Activated naive CD4-positive, alpha-beta T cell treated with anti-CD3 and anti-CD28 coated beads for 36 hours (primary cell): ENCODE measurements at regions of chr1 and their contacts with region 1.

Region 1: DNA sequence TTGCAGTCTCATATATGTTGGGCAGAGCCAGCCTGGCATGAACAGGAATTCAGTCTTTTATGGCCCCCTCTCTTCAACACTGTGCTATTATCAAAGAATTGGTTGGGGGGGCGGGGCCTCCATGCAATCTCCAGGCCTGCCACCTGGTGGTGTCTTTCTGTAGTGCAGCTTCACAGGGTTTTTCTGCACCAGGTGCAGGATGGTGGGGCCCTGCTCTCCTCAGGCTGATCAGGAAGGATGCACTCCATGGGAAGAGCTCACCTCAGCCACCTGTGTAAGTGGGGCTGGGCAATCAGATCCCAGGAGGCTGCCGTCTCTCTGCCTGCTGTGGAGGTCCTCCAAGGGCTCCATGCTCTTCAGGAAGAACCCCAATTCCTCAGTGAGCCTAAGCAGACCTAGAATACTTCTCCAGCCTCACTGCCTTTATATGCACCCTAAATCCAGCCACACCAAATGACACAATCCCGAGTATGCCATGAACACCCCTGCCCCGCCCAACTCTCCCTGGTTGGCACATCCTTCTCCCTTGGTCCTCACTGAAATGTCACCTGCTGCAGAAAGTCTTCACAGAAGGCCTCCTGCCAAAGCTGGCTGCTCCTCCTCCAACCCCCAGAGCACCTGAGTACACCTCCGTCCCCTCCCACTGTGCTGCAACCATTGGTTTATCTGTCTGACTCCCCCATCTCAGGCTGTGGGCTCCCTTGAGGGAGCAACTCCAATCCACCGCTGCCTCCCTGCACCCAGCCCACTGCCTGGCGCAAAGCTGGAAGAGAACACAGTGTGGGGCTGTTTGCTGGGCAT is 16.5 kb downstream of the STK40 start:
- DNase-seq: peak; percentile 93
- H3K4me3 Mint-ChIP-seq: no peak overlapping the region
- H3K27ac Mint-ChIP-seq: peak overlapping the region; percentile 65
- H3K4me1 Mint-ChIP-seq: peaks cover 67% of the 10 kb centered on the region
- H3K27me3 Mint-ChIP-seq: no peaks in the 10 kb centered on the region

Region 2: GRCh38 chr1:35971601-35972000 is 397.7 kb before region 1 on chr1:
- CTCF ChIA-PET with region 1: no interaction called
- intact Hi-C with region 1: no loop called
- DNase-seq: no peak
- H3K4me3 Mint-ChIP-seq: no peak overlapping the region
- H3K27ac Mint-ChIP-seq: no peak overlapping the region
- H3K4me1 Mint-ChIP-seq: peaks cover 4% of the 10 kb centered on the region
- H3K27me3 Mint-ChIP-seq: no peaks in the 10 kb centered on the region

Region 3: DNA sequence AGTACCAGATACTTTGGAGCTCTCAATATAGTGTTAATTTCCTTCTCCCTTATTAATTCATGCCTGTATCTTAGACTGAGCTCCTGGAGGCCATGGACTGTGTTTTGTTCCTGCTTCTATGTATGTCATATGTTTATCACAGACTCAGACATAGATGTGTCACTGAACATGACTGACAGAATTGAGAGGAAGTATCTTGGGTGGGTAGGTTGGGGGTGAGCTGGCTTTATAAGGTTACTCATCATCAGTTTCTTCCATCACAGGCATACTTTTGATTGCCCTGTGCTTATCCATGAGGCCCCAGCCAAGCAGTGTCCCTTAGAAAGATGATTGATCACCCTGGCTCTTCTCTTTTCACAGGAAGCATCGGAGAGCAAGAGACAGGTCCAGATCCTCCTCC is 68.7 kb before region 1 on chr1:
- CTCF ChIA-PET with region 1: interaction called, 12 read pairs
- intact Hi-C with region 1: loop called (anchors 1 kb)
- DNase-seq: peak; percentile 39
- H3K4me3 Mint-ChIP-seq: no peak overlapping the region
- H3K27ac Mint-ChIP-seq: peak overlapping the region; percentile 77
- H3K4me1 Mint-ChIP-seq: peaks cover 64% of the 10 kb centered on the region
- H3K27me3 Mint-ChIP-seq: no peaks in the 10 kb centered on the region

Region 4: GRCh38 chr1:36323597-36324352 is 45.5 kb before region 1 on chr1 and contains the start of gene EVA1B:
- CTCF ChIA-PET with region 1: interaction called, 4 read pairs
- intact Hi-C with region 1: loop called (anchors 1 kb)
- DNase-seq: peak; percentile 63
- H3K4me3 Mint-ChIP-seq: peak within 1 kb of the TSS; percentile 68
- H3K27ac Mint-ChIP-seq: no peak within 1 kb of the TSS
- H3K4me1 Mint-ChIP-seq: peaks cover 16% of the 10 kb centered on the region
- H3K27me3 Mint-ChIP-seq: peaks cover 5% of the 10 kb centered on the region
- total RNA-seq, gene EVA1B: 1.9 to 2.1 TPM

Region 5: DNA sequence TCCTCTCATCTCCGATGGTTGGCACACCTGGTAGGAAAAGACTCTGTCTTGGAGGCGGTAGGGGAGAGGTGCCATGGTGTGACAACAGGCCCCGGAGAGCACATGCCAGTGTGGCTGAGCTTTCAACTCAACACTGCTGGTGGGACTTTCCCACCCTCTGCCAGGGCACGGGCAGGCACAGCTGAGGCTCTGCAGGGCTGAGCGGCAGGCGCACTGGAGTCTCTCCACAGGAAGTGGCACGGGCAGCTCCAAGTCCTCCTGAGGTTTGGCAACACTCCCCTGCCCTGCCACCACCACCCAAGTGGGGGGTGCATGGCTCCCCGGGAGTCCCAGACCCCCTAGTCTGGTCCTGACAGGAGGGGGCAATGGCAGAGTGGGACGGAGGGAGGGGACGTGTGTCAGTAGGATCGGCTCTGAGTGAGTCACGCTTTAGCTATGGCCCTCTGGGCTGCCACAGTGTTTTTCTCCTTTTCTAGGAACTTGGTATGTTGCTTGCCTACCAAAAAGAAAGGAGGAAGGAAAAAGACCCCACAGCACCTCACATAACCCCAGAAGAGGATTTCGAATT is 18.5 kb before region 1 on chr1:
- CTCF ChIA-PET with region 1: interaction called, 37 read pairs
- intact Hi-C with region 1: loop called (anchors 2 kb)
- DNase-seq: peak; percentile 74
- H3K4me3 Mint-ChIP-seq: no peak overlapping the region
- H3K27ac Mint-ChIP-seq: peak overlapping the region; percentile 75
- H3K4me1 Mint-ChIP-seq: peaks cover 30% of the 10 kb centered on the region
- H3K27me3 Mint-ChIP-seq: no peaks in the 10 kb centered on the region

Region 6: DNA sequence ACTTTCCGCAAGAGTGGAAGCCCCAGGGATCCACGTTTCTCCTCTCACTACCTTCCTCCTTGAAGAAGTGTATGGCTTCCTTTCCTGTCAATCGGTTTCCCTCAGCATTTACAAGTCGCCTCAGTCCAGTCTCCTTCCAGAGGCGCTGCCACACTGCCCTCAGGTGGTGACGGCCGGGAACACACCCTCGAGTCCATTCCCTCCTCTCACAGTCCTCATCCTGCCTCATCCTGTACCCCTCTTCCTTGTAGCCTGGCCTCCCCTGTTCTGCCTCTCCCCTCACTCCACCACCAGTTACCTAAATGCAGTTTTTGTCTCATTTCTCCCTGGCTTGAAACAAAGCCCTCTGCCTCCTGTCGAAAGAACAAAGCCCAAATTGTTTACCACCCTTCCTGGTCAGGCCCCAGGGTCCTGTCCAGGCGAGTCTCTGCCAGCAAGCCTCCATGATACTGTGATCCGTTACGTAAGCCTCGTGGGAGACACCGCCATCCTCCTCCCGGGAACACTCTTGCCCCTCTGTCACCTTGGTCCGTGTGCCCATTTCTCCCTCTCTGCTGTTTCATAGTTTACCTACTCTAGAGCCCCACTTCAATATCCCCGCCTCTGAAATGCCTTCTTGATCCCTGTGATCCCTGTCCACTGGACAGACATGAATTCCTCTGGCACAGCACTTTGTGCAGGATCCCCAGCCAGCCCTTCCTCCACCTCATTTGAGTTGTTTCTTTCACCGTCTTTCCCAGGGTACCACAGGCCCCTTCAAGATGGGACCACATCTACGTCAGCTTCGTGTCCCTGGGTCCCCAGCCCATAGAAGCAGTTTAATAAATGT is 51.8 kb after region 1 on chr1:
- CTCF ChIA-PET with region 1: interaction called, 9 read pairs
- intact Hi-C with region 1: loop called (anchors 1 kb)
- DNase-seq: peak; percentile 97
- H3K4me3 Mint-ChIP-seq: peak overlapping the region; percentile 45
- H3K27ac Mint-ChIP-seq: peak overlapping the region; percentile 93
- H3K4me1 Mint-ChIP-seq: peaks cover 20% of the 10 kb centered on the region
- H3K27me3 Mint-ChIP-seq: no peaks in the 10 kb centered on the region